Heart right ventricle (tissue), 16 donors: ENCODE measurements at regions of chr9 and their contacts with region 1.

Region 1: DNA sequence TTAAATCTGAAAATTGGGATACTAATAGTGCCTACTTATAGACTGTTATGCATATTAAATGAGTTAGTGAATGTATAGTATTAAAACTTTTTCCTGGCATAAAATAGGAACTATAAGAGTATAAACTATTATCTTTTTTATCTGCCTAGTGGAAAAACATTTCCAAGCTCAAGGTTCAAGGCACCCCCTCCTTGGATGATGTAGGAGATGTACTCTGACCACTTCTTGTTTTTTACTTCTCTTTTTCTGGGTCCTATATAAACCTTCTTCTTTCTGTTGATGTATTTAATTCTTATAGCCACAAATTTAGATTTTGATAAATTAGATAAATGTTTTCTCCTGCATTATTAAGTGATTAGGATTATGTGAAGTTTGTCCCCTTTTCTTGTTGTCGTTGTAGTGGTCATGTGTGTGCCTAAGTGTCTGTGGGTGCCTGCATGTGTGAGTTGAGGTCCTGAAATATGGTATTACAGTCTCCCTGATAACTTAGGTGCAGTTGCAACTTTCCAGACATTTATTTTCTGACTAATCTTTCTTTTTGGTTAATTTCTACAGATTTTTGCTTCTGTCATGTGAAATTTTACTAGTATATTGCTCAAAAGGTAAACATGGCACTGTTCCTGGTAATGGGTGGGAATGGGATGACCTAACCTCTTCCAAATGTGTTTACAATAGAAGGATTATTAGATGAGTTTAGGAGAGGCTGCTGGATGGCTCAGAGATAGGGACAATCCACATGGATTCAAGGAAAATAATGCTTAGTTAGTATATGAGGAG is 160.8 kb upstream of the CDKN2B start:
- DNase-seq: no peak
- ATAC-seq: peak in 2 of 8 donors; percentile 34 to 42
- H3K4me3 ChIP-seq: no peak overlapping the region
- H3K27ac ChIP-seq: peak overlapping the region in 1 of 10 donors; percentile 36
- H3K4me1 ChIP-seq: peaks cover 0 to 30% (median 0%) of the 10 kb centered on the region in 9 donors
- H3K27me3 ChIP-seq: no peaks in the 10 kb centered on the region
- CTCF ChIP-seq: no peak

Region 2: GRCh38 chr9:22211593-22212360 is 41.9 kb after region 1 on chr9:
- intact Hi-C with region 1: loop called in 1 of 10 experiments (anchors 10 kb)
- DNase-seq: no peak
- ATAC-seq: peak in 4 of 8 donors; percentile 46 to 58 (median 54)
- H3K4me3 ChIP-seq: no peak overlapping the region
- H3K27ac ChIP-seq: peak overlapping the region in 3 of 10 donors; percentile 25 to 51 (median 39)
- H3K4me1 ChIP-seq: peaks cover 0 to 27% (median 4%) of the 10 kb centered on the region in 9 donors
- H3K27me3 ChIP-seq: peaks cover 0 to 4% (median 0%) of the 10 kb centered on the region in 7 donors
- CTCF ChIP-seq: no peak

Region 3: GRCh38 chr9:22483528-22484070 is 313.7 kb after region 1 on chr9:
- intact Hi-C with region 1: no loop called
- DNase-seq: no peak
- ATAC-seq: no peak
- H3K4me3 ChIP-seq: no peak overlapping the region
- H3K27ac ChIP-seq: no peak overlapping the region
- H3K4me1 ChIP-seq: no peaks in the 10 kb centered on the region
- H3K27me3 ChIP-seq: no peaks in the 10 kb centered on the region
- CTCF ChIP-seq: no peak